ENCODE measurements at regions of chr3 and their contacts with region 1.

Region 1: GRCh38 chr3:66253790-66254620 is 33.2 kb downstream of the SLC25A26 start:
- DNase-seq: peak; percentile 65
- H3K4me3 ChIP-seq: no peak overlapping the region
- H3K27ac ChIP-seq: no peak overlapping the region
- H3K4me1 ChIP-seq: peaks cover 6% of the 10 kb centered on the region
- H3K27me3 ChIP-seq: no peaks in the 10 kb centered on the region
- CTCF ChIP-seq: peak; percentile 28 to 41
- POLR2A ChIP-seq: no peak

Region 2: GRCh38 chr3:66270701-66271100 is 16.7 kb after region 1 on chr3:
- CTCF ChIA-PET with region 1: interaction called, 18 read pairs
- POLR2A ChIA-PET with region 1: no interaction called
- dilution Hi-C with region 1: no loop called
- intact Hi-C with region 1: no loop called
- DNase-seq: no peak
- H3K4me3 ChIP-seq: no peak overlapping the region
- H3K27ac ChIP-seq: no peak overlapping the region
- H3K4me1 ChIP-seq: no peaks in the 10 kb centered on the region
- H3K27me3 ChIP-seq: no peaks in the 10 kb centered on the region
- CTCF ChIP-seq: no peak
- POLR2A ChIP-seq: no peak

Region 3: DNA sequence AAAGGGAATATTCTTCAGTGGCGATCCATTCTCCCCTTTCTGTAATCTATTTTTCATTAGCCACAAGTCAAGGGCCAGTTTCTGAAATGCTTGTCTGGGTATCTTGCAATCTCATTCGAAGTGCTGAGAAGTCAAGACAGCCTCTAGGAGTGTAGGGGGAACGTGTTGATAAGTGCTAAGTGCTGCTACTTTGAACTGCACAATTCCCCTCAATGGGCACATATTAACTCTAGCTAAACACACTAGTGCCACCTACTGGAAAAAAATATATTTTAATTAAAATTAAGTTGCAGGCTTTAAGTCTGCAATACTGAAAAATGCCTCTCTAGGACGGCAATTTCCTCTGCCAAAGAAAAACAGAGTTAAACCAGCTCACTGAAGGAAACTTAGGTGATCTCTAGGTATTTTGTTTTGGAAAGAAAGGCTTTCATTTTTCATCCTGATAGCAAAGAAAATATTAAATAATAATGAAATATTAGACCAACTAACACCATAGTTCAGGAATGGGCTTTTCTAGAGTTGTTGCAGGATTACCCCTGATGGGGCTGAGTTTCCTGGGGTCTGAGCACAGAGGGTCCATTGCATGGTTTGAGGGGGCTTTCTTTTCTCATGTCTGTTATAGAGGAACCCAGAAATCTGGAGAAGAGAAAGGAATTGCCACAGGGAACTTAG is 562.2 kb after region 1 on chr3:
- CTCF ChIA-PET with region 1: interaction called, 284 read pairs
- POLR2A ChIA-PET with region 1: no interaction called
- dilution Hi-C with region 1: no loop called
- intact Hi-C with region 1: loop called (anchors 1 kb)
- DNase-seq: peak; percentile 64
- H3K4me3 ChIP-seq: no peak overlapping the region
- H3K27ac ChIP-seq: no peak overlapping the region
- H3K4me1 ChIP-seq: no peaks in the 10 kb centered on the region
- H3K27me3 ChIP-seq: peaks cover 17 to 20% of the 10 kb centered on the region in 2 experiments
- CTCF ChIP-seq: peak in 1 of 2 donors; percentile 26
- POLR2A ChIP-seq: no peak

Region 4: GRCh38 chr3:66822186-66823008 is 568.4 kb after region 1 on chr3:
- CTCF ChIA-PET with region 1: interaction called, 284 read pairs
- POLR2A ChIA-PET with region 1: no interaction called
- dilution Hi-C with region 1: no loop called
- intact Hi-C with region 1: loop called (anchors 1 kb)
- DNase-seq: peak; percentile 74
- H3K4me3 ChIP-seq: no peak overlapping the region
- H3K27ac ChIP-seq: no peak overlapping the region
- H3K4me1 ChIP-seq: no peaks in the 10 kb centered on the region
- H3K27me3 ChIP-seq: peaks cover 14 to 16% of the 10 kb centered on the region in 2 experiments
- CTCF ChIP-seq: peak; percentile 74 to 83
- POLR2A ChIP-seq: no peak

Region 5: DNA sequence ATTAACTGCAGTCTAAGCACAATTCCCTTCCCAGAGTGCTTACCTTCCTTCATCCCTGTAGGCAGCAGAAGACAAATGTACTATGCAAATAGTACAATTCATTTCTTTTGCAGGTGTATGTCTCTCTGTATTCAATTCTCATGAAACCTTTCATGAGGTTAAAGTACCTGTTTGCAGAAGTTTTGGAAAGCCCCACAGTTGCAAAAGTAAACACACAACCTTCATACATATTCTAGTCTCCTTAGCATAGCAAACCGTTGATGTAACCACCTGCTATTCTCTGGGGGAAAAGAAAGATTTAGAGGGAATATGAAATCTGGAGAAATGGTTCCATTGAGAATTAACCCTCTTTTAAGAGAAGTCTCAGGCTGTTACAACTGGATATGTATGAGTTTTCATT is 1600.7 kb after region 1 on chr3:
- CTCF ChIA-PET with region 1: no interaction called
- POLR2A ChIA-PET with region 1: no interaction called
- dilution Hi-C with region 1: no loop called
- intact Hi-C with region 1: loop called (anchors 10 kb)
- DNase-seq: no peak
- H3K4me3 ChIP-seq: no peak overlapping the region
- H3K27ac ChIP-seq: no peak overlapping the region
- H3K4me1 ChIP-seq: no peaks in the 10 kb centered on the region
- H3K27me3 ChIP-seq: no peaks in the 10 kb centered on the region
- CTCF ChIP-seq: no peak
- POLR2A ChIP-seq: no peak